ENCODE measurements at regions of chr10 and their contacts with region 1.

Region 1: DNA sequence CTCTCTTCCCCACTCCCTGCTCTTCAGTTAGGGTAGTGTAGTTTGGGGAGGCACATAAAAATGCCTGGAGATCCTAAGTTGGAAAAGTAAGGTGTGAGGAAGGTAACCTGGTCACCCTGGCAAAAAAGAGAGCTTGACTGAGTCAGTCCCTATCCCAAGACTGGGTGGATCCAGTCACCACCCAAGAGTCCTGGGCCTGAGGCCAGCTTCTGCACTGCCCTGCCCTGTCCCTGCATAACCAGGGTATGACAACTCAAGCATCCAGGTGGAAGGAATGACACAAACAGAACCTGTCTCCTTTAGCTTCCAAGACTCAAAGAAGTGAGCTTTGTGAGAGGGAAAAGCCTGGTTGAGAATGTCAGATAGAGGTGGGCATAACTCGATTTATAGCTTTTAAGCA is 26.9 kb upstream of the SORBS1 start:
- DNase-seq: peak in 1 of 2 donors; percentile 30
- ATAC-seq: peak; percentile 39 to 49
- H3K4me3 ChIP-seq: no peak overlapping the region
- H3K27ac ChIP-seq: no peak overlapping the region
- H3K4me1 ChIP-seq: no peaks in the 10 kb centered on the region
- H3K27me3 ChIP-seq: no peaks in the 10 kb centered on the region
- CTCF ChIP-seq: no peak
- POLR2A ChIP-seq: no peak

Region 2: GRCh38 chr10:95656291-95657164 is 68.5 kb after region 1 on chr10 and contains the start of gene ALDH18A1:
- in situ Hi-C with region 1: no loop called
- intact Hi-C with region 1: no loop called
- DNase-seq: peak; percentile 55 to 80
- ATAC-seq: peak; percentile 91 to 92
- H3K4me3 ChIP-seq: peak within 1 kb of the TSS; percentile 68 to 100 (median 75)
- H3K27ac ChIP-seq: peak within 1 kb of the TSS; percentile 24 to 74 (median 40)
- H3K4me1 ChIP-seq: peaks cover 5 to 7% of the 10 kb centered on the region in 2 donors
- H3K27me3 ChIP-seq: no peaks in the 10 kb centered on the region
- CTCF ChIP-seq: no peak
- POLR2A ChIP-seq: no peak
- total RNA-seq, gene ALDH18A1: 2.6 to 6.7 (median 5.7) TPM

Region 3: DNA sequence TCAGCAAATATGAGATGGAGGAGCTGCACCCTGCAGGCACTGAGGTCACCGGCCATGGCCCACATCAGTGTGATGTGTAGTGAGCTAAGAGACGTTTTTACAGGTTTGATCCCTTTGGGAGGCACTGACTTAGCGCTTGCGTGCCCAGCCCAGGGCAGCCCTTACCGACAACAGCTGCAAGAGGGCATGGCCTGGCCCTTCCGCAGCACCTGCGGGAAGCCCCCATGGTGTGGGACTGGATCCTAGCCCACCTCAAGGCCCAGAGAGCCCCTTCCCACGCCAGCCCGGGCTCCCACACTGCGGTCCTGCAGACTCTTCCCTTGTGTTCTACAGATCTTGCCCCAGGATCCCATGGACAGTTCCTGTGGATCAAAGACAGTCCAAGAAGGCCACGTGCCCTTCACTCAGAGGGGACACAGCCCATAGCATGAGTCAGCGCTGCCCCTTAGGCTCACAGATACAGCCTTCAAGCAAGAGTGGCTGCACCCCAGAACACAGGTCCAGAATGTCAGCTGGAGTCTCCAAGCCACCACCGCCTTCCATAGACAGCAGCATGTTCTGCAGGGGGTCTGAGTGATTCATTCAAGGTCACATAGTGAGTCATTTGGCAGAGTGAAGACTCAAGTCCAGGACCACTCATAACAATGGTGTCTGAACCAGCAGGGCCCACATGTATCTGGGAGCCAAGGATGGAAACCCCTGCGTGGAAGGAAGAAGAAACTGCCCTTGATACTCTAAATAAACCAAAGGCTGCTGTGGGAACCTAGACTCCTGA is 900.3 kb after region 1 on chr10:
- in situ Hi-C with region 1: no loop called
- intact Hi-C with region 1: loop called (anchors 5 kb)
- DNase-seq: no peak
- ATAC-seq: no peak
- H3K4me3 ChIP-seq: no peak overlapping the region
- H3K27ac ChIP-seq: no peak overlapping the region
- H3K4me1 ChIP-seq: no peaks in the 10 kb centered on the region
- H3K27me3 ChIP-seq: no peaks in the 10 kb centered on the region
- CTCF ChIP-seq: no peak
- POLR2A ChIP-seq: no peak

Measured in gastrocnemius medialis (tissue), 4 donors.